ENCODE measurements at regions of chr14 and their contacts with region 1.

Region 1: GRCh38 chr14:86902176-86902950 is 1090.6 kb downstream of the GALC start:
- DNase-seq: no peak
- H3K4me3 Mint-ChIP-seq: no peak overlapping the region
- H3K27ac Mint-ChIP-seq: no peak overlapping the region
- H3K4me1 Mint-ChIP-seq: no peaks in the 10 kb centered on the region
- H3K27me3 Mint-ChIP-seq: no peaks in the 10 kb centered on the region
- CTCF ChIP-seq: no peak

Region 2: GRCh38 chr14:85535991-85536832 is 1366.2 kb before region 1 on chr14:
- CTCF ChIA-PET with region 1: no interaction called
- POLR2A ChIA-PET with region 1: no interaction called
- intact Hi-C with region 1: loop called (anchors 2 kb)
- DNase-seq: peak; percentile 62
- H3K4me3 Mint-ChIP-seq: peak overlapping the region; percentile 86
- H3K27ac Mint-ChIP-seq: no peak overlapping the region
- H3K4me1 Mint-ChIP-seq: peaks cover 35% of the 10 kb centered on the region
- H3K27me3 Mint-ChIP-seq: no peaks in the 10 kb centered on the region
- CTCF ChIP-seq: peak; percentile 33

Region 3: GRCh38 chr14:86057018-86057667 is 845.2 kb before region 1 on chr14:
- CTCF ChIA-PET with region 1: no interaction called
- POLR2A ChIA-PET with region 1: no interaction called
- intact Hi-C with region 1: loop called (anchors 5 kb)
- DNase-seq: peak; percentile 55
- H3K4me3 Mint-ChIP-seq: no peak overlapping the region
- H3K27ac Mint-ChIP-seq: no peak overlapping the region
- H3K4me1 Mint-ChIP-seq: no peaks in the 10 kb centered on the region
- H3K27me3 Mint-ChIP-seq: no peaks in the 10 kb centered on the region
- CTCF ChIP-seq: peak; percentile 75

Region 4: GRCh38 chr14:87312169-87312893 is 410.0 kb after region 1 on chr14:
- CTCF ChIA-PET with region 1: no interaction called
- POLR2A ChIA-PET with region 1: no interaction called
- intact Hi-C with region 1: no loop called
- DNase-seq: no peak
- H3K4me3 Mint-ChIP-seq: no peak overlapping the region
- H3K27ac Mint-ChIP-seq: no peak overlapping the region
- H3K4me1 Mint-ChIP-seq: peaks cover 7% of the 10 kb centered on the region
- H3K27me3 Mint-ChIP-seq: no peaks in the 10 kb centered on the region
- CTCF ChIP-seq: no peak

Region 5: GRCh38 chr14:88426271-88426670 is 1523.9 kb after region 1 on chr14:
- CTCF ChIA-PET with region 1: no interaction called
- POLR2A ChIA-PET with region 1: no interaction called
- intact Hi-C with region 1: no loop called
- DNase-seq: no peak
- H3K4me3 Mint-ChIP-seq: no peak overlapping the region
- H3K27ac Mint-ChIP-seq: no peak overlapping the region
- H3K4me1 Mint-ChIP-seq: peaks cover 6% of the 10 kb centered on the region
- H3K27me3 Mint-ChIP-seq: no peaks in the 10 kb centered on the region
- CTCF ChIP-seq: no peak

Measured in MCF 10A (cell line).